Calu3 (cell line): ENCODE measurements at regions of chr2 and their contacts with region 1.

Region 1: GRCh38 chr2:30026087-30027055 is 105.0 kb upstream of the ALK start:
- DNase-seq: peak; percentile 67
- H3K4me3 Mint-ChIP-seq: no peak overlapping the region
- H3K27ac Mint-ChIP-seq: no peak overlapping the region
- H3K4me1 Mint-ChIP-seq: peaks cover 16% of the 10 kb centered on the region
- H3K27me3 Mint-ChIP-seq: peaks cover 48% of the 10 kb centered on the region
- CTCF ChIP-seq: peak; percentile 59

Region 2: DNA sequence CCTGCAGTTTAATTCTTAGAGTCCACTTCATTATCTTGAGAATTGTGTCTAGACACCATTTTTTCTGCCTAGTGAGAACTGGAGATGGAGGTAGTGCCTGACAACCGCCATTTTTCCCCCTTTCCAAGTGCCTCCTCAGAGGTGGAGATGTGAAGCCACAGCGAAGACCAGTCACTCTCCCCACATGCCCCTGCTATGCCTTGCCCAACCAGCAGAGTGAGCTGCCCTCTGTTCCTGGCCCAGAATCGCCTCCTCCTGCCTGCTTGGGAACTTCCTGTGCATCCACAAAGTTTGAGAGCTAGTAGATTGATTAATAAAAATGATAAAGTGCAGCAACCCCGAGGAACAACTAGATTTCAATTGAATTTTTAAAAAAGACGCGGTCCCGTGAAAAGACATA is 787.9 kb before region 1 on chr2:
- CTCF ChIA-PET with region 1: no interaction called
- intact Hi-C with region 1: loop called (anchors 5 kb)
- DNase-seq: peak; percentile 69
- H3K4me3 Mint-ChIP-seq: no peak overlapping the region
- H3K27ac Mint-ChIP-seq: no peak overlapping the region
- H3K4me1 Mint-ChIP-seq: peaks cover 10% of the 10 kb centered on the region
- H3K27me3 Mint-ChIP-seq: peaks cover 96% of the 10 kb centered on the region
- CTCF ChIP-seq: peak; percentile 63

Region 3: DNA sequence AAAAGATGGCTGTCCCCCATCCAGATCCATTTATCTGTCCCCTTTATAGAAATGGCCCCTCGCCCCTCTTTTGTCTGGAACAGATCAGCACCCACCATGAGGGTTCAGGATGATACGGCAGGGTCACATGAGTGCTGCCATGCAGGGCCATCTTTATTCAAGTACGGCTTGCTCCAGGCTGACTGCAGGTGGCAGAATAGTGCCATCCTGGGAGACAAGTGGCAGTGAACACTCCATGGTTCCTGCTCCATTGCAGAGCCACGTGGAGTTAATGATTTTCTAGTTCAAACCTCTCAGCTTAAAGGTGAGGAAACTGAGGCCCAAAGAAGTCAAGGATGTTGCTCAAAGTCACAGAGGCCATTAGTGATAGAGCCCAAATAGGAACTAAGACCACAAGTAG is 730.5 kb before region 1 on chr2:
- CTCF ChIA-PET with region 1: no interaction called
- intact Hi-C with region 1: loop called (anchors 10 kb)
- DNase-seq: peak; percentile 21
- H3K4me3 Mint-ChIP-seq: no peak overlapping the region
- H3K27ac Mint-ChIP-seq: no peak overlapping the region
- H3K4me1 Mint-ChIP-seq: no peaks in the 10 kb centered on the region
- H3K27me3 Mint-ChIP-seq: peaks cover 95% of the 10 kb centered on the region
- CTCF ChIP-seq: no peak

Region 4: DNA sequence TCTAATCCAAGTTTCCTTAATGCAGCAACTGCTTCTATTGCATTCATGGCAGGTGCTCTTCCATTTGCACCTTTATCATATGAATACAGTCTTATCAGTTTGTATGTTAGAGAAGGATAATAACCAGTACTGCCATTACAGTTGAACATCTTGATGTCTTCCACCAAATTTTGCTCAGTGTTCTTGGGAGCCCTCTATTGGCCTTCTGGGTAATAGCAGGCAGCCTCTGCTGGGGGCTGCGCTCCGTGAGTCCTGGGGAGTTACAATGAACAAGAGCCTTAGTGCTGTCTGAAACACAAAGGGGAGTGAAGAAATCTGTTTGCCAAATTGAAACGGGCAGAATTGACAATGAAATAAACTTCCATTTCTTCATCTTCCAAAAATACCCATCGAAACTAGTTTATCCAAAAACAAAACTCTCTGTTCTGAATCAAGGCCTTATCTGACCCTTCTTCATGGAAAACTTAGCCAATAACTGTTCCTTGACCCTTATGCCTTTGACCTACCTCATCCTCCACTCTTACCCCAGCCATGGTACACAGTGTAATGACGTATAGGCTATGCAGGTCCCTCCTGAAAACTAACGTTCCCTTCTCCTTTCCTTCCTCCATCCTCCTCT is 184.9 kb before region 1 on chr2:
- CTCF ChIA-PET with region 1: no interaction called
- intact Hi-C with region 1: loop called (anchors 5 kb)
- DNase-seq: peak; percentile 45
- H3K4me3 Mint-ChIP-seq: no peak overlapping the region
- H3K27ac Mint-ChIP-seq: no peak overlapping the region
- H3K4me1 Mint-ChIP-seq: no peaks in the 10 kb centered on the region
- H3K27me3 Mint-ChIP-seq: peaks cover 96% of the 10 kb centered on the region
- CTCF ChIP-seq: peak; percentile 86

Region 5: GRCh38 chr2:29923110-29923721 is 103.2 kb before region 1 on chr2:
- CTCF ChIA-PET with region 1: interaction called, 3 read pairs
- intact Hi-C with region 1: loop called (anchors 1 kb)
- DNase-seq: peak; percentile 62
- H3K4me3 Mint-ChIP-seq: no peak overlapping the region
- H3K27ac Mint-ChIP-seq: no peak overlapping the region
- H3K4me1 Mint-ChIP-seq: no peaks in the 10 kb centered on the region
- H3K27me3 Mint-ChIP-seq: peaks cover 94% of the 10 kb centered on the region
- CTCF ChIP-seq: peak; percentile 74

Region 6: DNA sequence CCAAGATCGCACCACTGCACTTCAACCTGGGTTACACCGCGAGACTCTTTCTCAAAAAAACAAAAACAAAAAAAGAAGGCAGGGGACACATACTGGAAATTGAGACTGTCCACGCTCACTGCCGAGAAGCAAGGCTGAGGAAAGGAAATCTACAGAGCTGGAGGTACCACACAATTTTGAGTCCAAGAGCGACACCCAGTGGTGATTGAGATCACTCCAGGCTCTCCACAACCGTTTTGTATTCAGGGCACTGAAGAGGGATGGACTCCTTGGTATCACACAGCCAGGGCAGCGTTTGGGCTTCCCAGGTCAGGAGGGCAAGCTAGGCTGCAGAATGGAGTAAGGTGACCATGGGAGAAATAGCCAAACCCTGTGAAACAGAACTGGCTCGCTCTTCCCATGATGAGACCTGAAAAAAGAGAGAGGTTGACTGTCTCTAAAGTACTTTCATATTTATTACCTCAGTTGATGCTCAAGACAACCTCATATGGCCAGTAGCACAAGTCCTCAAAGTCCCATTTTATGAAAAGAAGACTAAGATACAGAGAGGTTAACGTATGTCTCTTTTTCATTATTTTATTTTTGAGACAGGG is 46.0 kb after region 1 on chr2:
- CTCF ChIA-PET with region 1: no interaction called
- intact Hi-C with region 1: no loop called
- DNase-seq: peak; percentile 79
- H3K4me3 Mint-ChIP-seq: no peak overlapping the region
- H3K27ac Mint-ChIP-seq: no peak overlapping the region
- H3K4me1 Mint-ChIP-seq: no peaks in the 10 kb centered on the region
- H3K27me3 Mint-ChIP-seq: peaks cover 81% of the 10 kb centered on the region
- CTCF ChIP-seq: peak; percentile 79